T-cell (primary cell): ENCODE measurements at regions of chr1 and their contacts with region 1.

Region 1: DNA sequence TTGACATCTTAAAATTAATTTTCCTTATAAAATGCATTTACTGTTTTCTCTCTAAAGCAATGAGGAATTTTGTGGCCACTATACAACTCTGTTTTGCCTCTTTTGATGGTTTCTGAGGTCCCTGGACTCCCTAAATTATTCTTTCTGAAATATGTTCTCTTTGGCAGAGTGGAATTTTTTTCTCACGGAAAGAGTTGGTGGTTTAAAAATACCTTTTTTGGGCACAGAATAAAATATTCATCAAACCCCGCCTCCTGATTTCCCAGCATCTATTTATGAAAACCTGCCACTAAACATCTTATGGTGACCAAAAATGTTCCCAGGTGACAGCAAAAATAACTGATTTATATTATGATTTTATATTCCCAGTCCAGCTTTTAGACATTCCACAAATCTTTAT is 165.3 kb upstream of the SYT6 start:
- DNase-seq: no peak
- ATAC-seq: no peak
- H3K4me3 ChIP-seq: no peak overlapping the region
- H3K4me3 Mint-ChIP-seq: no peak overlapping the region
- H3K27ac ChIP-seq: no peak overlapping the region
- H3K27ac Mint-ChIP-seq: no peak overlapping the region
- H3K4me1 ChIP-seq: peaks cover 0 to 4% of the 10 kb centered on the region in 2 experiments
- H3K4me1 Mint-ChIP-seq: peaks cover 5 to 15% (median 7%) of the 10 kb centered on the region in 3 donors
- H3K27me3 ChIP-seq: no peaks in the 10 kb centered on the region
- H3K27me3 Mint-ChIP-seq: no peaks in the 10 kb centered on the region

Region 2: DNA sequence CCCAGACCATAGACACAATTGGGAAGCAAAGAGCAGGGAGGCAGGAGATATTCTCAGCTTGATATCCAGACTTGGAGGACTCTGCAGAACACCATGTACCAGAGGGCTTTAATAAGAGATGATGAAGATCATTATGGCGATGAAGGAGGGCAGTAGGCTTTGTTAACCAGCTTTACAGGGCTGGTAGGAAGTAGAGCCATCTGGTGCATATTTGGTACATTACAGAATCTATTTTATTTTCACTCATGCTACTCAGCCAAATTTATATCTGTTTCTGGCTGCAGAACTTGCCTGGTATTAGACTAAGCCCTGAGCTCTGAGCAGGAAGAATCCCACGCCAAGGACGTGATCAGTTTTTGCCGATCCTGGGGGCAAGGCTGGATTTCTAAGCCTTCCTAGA is 103.5 kb before region 1 on chr1:
- CTCF ChIA-PET with region 1: no interaction called
- POLR2A ChIA-PET with region 1: no interaction called
- DNase-seq: no peak
- ATAC-seq: no peak
- H3K4me3 ChIP-seq: no peak overlapping the region
- H3K4me3 Mint-ChIP-seq: no peak overlapping the region
- H3K27ac ChIP-seq: no peak overlapping the region
- H3K27ac Mint-ChIP-seq: no peak overlapping the region
- H3K4me1 ChIP-seq: no peaks in the 10 kb centered on the region
- H3K4me1 Mint-ChIP-seq: peaks cover 0 to 6% (median 6%) of the 10 kb centered on the region in 3 donors
- H3K27me3 ChIP-seq: no peaks in the 10 kb centered on the region
- H3K27me3 Mint-ChIP-seq: peaks cover 6 to 12% of the 10 kb centered on the region in 2 donors

Region 3: GRCh38 chr1:114716304-114717170 is 397.6 kb after region 1 on chr1 and contains the start of gene NRAS:
- CTCF ChIA-PET with region 1: interaction called in 1 of 2 experiments, 10 read pairs
- POLR2A ChIA-PET with region 1: no interaction called
- DNase-seq: peak; percentile 89 to 96 (median 95)
- ATAC-seq: peak; percentile 95 to 99 (median 98)
- H3K4me3 ChIP-seq: peak within 1 kb of the TSS; percentile 83 to 86
- H3K4me3 Mint-ChIP-seq: peak within 1 kb of the TSS; percentile 91 to 99 (median 96)
- H3K27ac ChIP-seq: peak within 1 kb of the TSS; percentile 98
- H3K27ac Mint-ChIP-seq: peak within 1 kb of the TSS; percentile 95
- H3K4me1 ChIP-seq: peaks cover 15% of the 10 kb centered on the region in 2 experiments
- H3K4me1 Mint-ChIP-seq: peaks cover 26 to 32% (median 30%) of the 10 kb centered on the region in 3 donors
- H3K27me3 ChIP-seq: no peaks in the 10 kb centered on the region
- H3K27me3 Mint-ChIP-seq: no peaks in the 10 kb centered on the region
- total RNA-seq, gene NRAS: 19.9 to 29.7 (median 22.1) TPM